ENCODE measurements at regions of chr17 and their contacts with region 1.

Region 1: DNA sequence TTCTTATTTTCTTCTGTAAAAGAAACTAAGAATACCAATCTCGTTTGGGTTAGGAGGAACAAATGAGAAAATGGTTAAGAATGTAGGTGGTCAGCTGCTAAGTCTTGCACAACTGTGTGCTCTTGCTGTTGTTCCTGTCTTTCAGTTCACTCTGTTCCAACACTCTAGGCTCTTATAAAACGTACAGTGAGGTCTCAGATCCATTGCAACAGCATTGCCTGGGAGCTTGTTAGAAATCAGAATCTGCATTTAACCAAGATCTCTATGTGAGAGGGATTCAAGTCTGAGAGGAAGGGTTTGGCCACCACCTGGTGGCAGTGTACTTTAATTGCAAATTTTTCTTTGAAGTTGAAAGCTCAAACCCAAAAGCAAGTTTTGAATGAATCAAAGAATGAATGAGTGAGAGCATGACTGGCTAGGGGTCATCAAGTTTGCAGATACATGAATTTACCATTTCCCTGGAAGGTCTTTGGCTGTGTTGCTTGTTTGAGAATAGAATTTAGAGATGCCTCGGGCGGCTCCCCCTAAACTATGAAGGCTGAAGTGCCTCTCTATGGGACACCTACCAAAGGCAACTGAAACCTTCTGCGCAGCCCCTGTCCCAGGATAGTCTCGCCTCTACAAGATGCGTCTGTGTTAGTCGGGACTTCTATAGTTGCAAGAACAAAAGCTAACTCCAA is 2.5 kb downstream of the ALOX15B start:
- DNase-seq: no peak
- ATAC-seq: peak; percentile 67 to 76

Region 2: GRCh38 chr17:7745748-7746470 is 295.5 kb before region 1 on chr17:
- intact Hi-C with region 1: loop called in 1 of 2 experiments (anchors 10 kb)
- DNase-seq: peak; percentile 41
- ATAC-seq: peak in 1 of 2 donors; percentile 13

Region 3: DNA sequence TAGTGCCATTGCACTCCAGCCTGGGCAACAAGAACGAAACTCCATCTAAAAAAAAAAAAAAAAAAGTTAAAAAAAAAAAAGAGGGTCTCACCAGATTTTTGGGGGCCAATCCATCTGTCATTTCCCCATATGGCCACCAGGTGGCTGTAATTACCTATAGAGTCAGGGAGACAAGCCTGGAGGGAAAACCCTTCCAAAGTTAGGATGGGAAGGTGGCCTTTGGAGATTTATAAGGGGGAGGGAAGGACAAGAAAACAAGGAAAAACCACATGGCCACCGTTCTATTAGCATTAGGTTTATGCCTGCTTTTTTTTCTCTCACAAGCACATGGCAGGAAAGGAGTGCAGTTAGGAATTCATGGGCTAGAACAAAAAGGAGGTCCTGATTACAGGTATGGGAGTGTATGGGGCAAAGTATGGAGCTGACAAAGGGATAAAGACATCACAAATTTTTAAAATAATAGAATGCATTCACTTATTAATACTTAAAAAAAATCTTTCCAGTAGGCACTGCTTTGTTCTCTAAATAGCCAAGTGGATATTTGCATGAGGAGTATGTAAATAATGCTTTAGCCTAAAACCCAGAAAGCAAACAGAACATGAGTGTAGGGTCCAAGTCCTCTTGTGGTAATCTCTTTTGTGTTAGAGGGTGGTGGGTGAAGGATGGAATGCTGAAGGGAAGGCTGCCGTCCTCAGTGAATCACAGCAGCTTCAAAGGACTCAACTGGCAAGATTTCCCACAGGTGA is 178.5 kb before region 1 on chr17:
- intact Hi-C with region 1: loop called in 1 of 2 experiments (anchors 5 kb)
- DNase-seq: peak; percentile 42
- ATAC-seq: no peak

Region 4: GRCh38 chr17:7912927-7913524 is 128.4 kb before region 1 on chr17:
- intact Hi-C with region 1: loop called in 1 of 2 experiments (anchors 5 kb)
- DNase-seq: no peak
- ATAC-seq: no peak

Region 5: GRCh38 chr17:8001976-8002720 is 39.2 kb before region 1 on chr17 and contains the start of gene GUCY2D:
- intact Hi-C with region 1: no loop called
- DNase-seq: no peak
- ATAC-seq: peak; percentile 17 to 30
- total RNA-seq, gene GUCY2D: 0.10 to 0.38 TPM